ENCODE measurements at regions of chr7 and their contacts with region 1.

Region 1: DNA sequence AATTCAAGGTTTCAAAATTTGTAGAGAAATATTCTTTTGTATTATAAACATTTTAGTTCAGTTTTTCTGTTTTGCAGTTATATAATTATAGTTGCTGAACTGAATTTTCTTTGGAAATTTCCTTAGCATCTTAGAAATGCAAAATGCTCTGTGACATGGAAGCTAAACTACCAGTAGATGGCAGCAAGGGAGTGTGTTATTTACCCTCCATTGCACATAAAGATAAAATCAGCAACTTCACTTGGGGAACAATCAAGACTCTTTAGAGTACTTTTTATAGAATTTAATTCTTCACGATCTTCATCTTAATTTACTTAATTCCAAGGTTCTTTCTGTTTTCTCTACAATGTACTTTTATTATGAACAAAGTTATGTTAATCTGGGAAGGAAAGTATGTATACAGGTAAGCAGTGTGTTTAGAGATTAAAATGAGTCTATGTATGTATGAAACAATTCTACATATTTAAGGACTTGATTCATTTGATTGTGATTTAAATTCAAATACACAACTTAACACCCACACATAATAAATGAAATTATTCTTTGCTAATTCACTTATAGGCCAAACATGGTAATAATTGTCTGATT is 404.2 kb downstream of the THSD7A start:
- DNase-seq: no peak
- ATAC-seq: peak; percentile 71
- H3K4me3 ChIP-seq: no peak overlapping the region
- H3K27ac ChIP-seq: no peak overlapping the region
- H3K4me1 ChIP-seq: no peaks in the 10 kb centered on the region
- H3K27me3 ChIP-seq: no peaks in the 10 kb centered on the region
- CTCF ChIP-seq: peak; percentile 53 to 76 (median 55); a peak in 5 of 6 replicates
- EP300 ChIP-seq: no peak
- POLR2A ChIP-seq: no peak
- RAD21 ChIP-seq: peak; percentile 86

Region 2: GRCh38 chr7:11355399-11356005 is 72.3 kb before region 1 on chr7:
- CTCF ChIA-PET with region 1: no interaction called
- POLR2A ChIA-PET with region 1: no interaction called
- RAD21 ChIA-PET with region 1: no interaction called
- SMC1A ChIA-PET with region 1: no interaction called
- in situ Hi-C with region 1: no loop called
- intact Hi-C with region 1: no loop called
- DNase-seq: no peak
- ATAC-seq: no peak
- H3K4me3 ChIP-seq: no peak overlapping the region
- H3K27ac ChIP-seq: no peak overlapping the region
- H3K4me1 ChIP-seq: no peaks in the 10 kb centered on the region
- H3K27me3 ChIP-seq: peaks cover 0 to 3% of the 10 kb centered on the region in 2 experiments; a peak in 1 of 4 replicates
- CTCF ChIP-seq: no peak
- EP300 ChIP-seq: no peak
- POLR2A ChIP-seq: no peak
- RAD21 ChIP-seq: no peak

Region 3: GRCh38 chr7:11557627-11558026 is 129.8 kb after region 1 on chr7:
- CTCF ChIA-PET with region 1: no interaction called
- POLR2A ChIA-PET with region 1: no interaction called
- RAD21 ChIA-PET with region 1: no interaction called
- SMC1A ChIA-PET with region 1: no interaction called
- in situ Hi-C with region 1: no loop called
- intact Hi-C with region 1: loop called (anchors 5 kb)
- DNase-seq: no peak
- ATAC-seq: peak; percentile 90
- H3K4me3 ChIP-seq: no peak overlapping the region
- H3K27ac ChIP-seq: no peak overlapping the region
- H3K4me1 ChIP-seq: no peaks in the 10 kb centered on the region
- H3K27me3 ChIP-seq: no peaks in the 10 kb centered on the region
- CTCF ChIP-seq: peak; percentile 30 to 41 (median 35); a peak in 4 of 6 replicates
- EP300 ChIP-seq: no peak
- POLR2A ChIP-seq: no peak
- RAD21 ChIP-seq: peak; percentile 28

Region 4: GRCh38 chr7:12067141-12067831 is 639.5 kb after region 1 on chr7:
- CTCF ChIA-PET with region 1: no interaction called
- POLR2A ChIA-PET with region 1: no interaction called
- RAD21 ChIA-PET with region 1: no interaction called
- SMC1A ChIA-PET with region 1: no interaction called
- in situ Hi-C with region 1: no loop called
- intact Hi-C with region 1: loop called (anchors 1 kb)
- DNase-seq: peak; percentile 5
- ATAC-seq: peak; percentile 97
- H3K4me3 ChIP-seq: no peak overlapping the region
- H3K27ac ChIP-seq: no peak overlapping the region
- H3K4me1 ChIP-seq: no peaks in the 10 kb centered on the region
- H3K27me3 ChIP-seq: no peaks in the 10 kb centered on the region
- CTCF ChIP-seq: peak; percentile 57 to 69 (median 67)
- EP300 ChIP-seq: no peak
- POLR2A ChIP-seq: no peak
- RAD21 ChIP-seq: peak; percentile 89

Measured in GM12878 (cell line).